Activated CD4-positive, alpha-beta memory T cell treated with anti-CD3 and anti-CD28 coated beads, Interleukin-2, amount 10 ng/mL, durations not matched to agents 7 days and 5 days (primary cell): ENCODE measurements at regions of chr4 and their contacts with region 1.

Region 1: GRCh38 chr4:158856852-158857251 is 88.0 kb downstream of the FNIP2 start:
- DNase-seq: no peak
- H3K4me3 Mint-ChIP-seq: no peak overlapping the region
- H3K27ac Mint-ChIP-seq: no peak overlapping the region
- H3K4me1 Mint-ChIP-seq: peaks cover 8% of the 10 kb centered on the region
- H3K27me3 Mint-ChIP-seq: no peaks in the 10 kb centered on the region

Region 2: GRCh38 chr4:158802914-158803313 is 53.9 kb before region 1 on chr4:
- CTCF ChIA-PET with region 1: no interaction called
- POLR2A ChIA-PET with region 1: no interaction called
- DNase-seq: no peak
- H3K4me3 Mint-ChIP-seq: no peak overlapping the region
- H3K27ac Mint-ChIP-seq: no peak overlapping the region
- H3K4me1 Mint-ChIP-seq: peaks cover 29% of the 10 kb centered on the region
- H3K27me3 Mint-ChIP-seq: no peaks in the 10 kb centered on the region

Region 3: DNA sequence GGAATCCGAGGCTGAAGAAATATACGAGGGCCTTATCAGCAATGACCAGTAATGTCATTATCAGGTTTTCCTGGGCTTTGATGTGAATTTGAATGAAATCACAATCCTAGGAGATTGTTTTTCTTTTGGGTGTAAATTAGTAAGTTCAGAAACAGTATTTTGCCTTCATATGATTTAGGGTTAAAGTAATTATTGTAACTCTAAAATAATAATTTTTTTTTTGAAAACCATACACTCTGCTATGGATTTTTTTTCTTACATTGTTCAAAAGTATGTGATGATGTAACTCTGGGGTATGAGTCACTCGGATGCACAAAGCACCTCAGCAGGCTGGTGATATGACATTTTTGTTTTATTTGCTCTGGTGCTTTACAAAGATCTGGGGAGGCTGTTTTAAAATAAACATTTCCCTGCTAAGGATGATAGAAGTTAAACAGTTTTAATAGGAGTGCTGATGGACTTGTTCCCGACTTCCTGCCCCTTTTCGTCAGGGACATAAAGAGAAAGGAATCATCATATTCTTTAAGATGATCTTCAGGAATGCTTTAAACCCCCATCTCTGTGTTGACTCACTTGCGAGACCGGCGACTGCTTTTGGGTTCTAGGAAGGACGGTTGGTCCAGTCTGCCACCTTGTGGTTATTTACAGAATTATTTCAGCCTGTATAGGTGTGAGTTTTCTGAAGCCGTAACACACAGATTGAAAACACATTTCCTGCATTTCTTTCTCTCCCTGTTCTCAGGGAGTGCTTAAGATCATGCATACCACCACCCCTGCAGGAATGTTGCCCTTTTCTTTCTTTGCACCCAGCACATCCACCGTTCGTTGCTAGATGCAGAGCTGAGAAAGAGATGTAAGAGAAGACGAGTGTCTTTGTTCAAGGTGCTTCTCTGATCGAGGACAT is 318.5 kb after region 1 on chr4:
- CTCF ChIA-PET with region 1: interaction called, 33 read pairs
- POLR2A ChIA-PET with region 1: no interaction called
- DNase-seq: peak; percentile 61
- H3K4me3 Mint-ChIP-seq: no peak overlapping the region
- H3K27ac Mint-ChIP-seq: no peak overlapping the region
- H3K4me1 Mint-ChIP-seq: peaks cover 42% of the 10 kb centered on the region
- H3K27me3 Mint-ChIP-seq: peaks cover 2% of the 10 kb centered on the region

Region 4: DNA sequence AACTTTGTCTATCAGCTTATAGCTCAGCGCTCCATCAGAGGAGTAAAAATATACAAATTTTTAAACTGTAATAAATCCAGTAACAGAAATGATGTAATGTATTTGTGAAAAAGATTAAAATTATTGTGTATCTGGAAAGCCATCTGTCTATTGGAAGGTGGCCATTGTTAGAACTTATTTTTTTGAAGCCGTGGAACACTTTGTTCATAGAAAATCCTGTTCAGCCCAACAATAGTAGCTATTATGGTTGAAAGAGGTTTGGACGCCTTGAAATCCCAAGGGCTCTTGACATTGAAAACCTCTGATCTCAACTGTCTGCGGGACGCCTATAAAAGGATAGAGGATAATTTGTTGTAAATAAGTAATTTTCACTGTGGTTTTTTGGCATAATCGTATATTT is 344.3 kb after region 1 on chr4:
- CTCF ChIA-PET with region 1: interaction called, 30 read pairs
- POLR2A ChIA-PET with region 1: interaction called, 4 read pairs
- DNase-seq: no peak
- H3K4me3 Mint-ChIP-seq: no peak overlapping the region
- H3K27ac Mint-ChIP-seq: no peak overlapping the region
- H3K4me1 Mint-ChIP-seq: peaks cover 32% of the 10 kb centered on the region
- H3K27me3 Mint-ChIP-seq: no peaks in the 10 kb centered on the region

Region 5: GRCh38 chr4:159206427-159206871 is 349.6 kb after region 1 on chr4:
- CTCF ChIA-PET with region 1: interaction called, 30 read pairs
- POLR2A ChIA-PET with region 1: interaction called, 4 read pairs
- DNase-seq: peak; percentile 32
- H3K4me3 Mint-ChIP-seq: peak overlapping the region; percentile 3
- H3K27ac Mint-ChIP-seq: peak overlapping the region; percentile 16
- H3K4me1 Mint-ChIP-seq: peaks cover 50% of the 10 kb centered on the region
- H3K27me3 Mint-ChIP-seq: no peaks in the 10 kb centered on the region